ENCODE measurements at regions of chr5 and their contacts with region 1.

Region 1: GRCh38 chr5:76337953-76338451 is 65.1 kb upstream of the IQGAP2 start:
- DNase-seq: peak; percentile 61 to 79 (median 68)
- ATAC-seq: peak; percentile 90
- H3K4me3 ChIP-seq: no peak overlapping the region
- H3K27ac ChIP-seq: no peak overlapping the region
- H3K4me1 ChIP-seq: peaks cover 2 to 9% of the 10 kb centered on the region in 2 experiments; a peak in 3 of 5 replicates
- H3K27me3 ChIP-seq: no peaks in the 10 kb centered on the region
- CTCF ChIP-seq: peak; percentile 68 to 72 (median 68)
- EP300 ChIP-seq: 0 out of 2 replicates have a peak, but pooled peaks have one; percentile 7
- POLR2A ChIP-seq: no peak
- RAD21 ChIP-seq: peak; percentile 65 to 79

Region 2: DNA sequence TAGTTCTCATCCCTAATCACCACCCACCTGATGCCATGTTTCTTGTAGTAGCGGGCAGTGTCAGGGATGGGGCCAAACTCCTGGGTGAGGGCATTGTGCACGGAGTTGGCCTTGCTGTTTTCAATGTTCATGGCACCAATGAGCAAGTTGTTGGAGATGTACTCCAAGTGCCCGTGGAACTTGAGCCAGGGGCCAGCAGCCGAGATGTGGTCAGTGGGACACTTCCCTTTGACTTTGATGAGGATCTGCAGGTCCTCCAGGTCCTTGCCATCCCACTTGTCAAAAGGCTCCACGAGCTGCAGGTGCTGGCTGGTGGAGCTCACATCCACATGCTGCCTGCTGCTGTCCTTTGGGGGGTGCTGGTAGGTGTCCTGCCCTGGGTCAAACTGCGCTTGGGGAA is 417.0 kb before region 1 on chr5:
- CTCF ChIA-PET with region 1: no interaction called
- POLR2A ChIA-PET with region 1: no interaction called
- in situ Hi-C with region 1: no loop called
- intact Hi-C with region 1: no loop called
- DNase-seq: no peak
- ATAC-seq: no peak
- H3K4me3 ChIP-seq: no peak overlapping the region
- H3K27ac ChIP-seq: no peak overlapping the region
- H3K4me1 ChIP-seq: no peaks in the 10 kb centered on the region
- H3K27me3 ChIP-seq: peaks cover 0 to 3% of the 10 kb centered on the region in 2 experiments; a peak in 1 of 5 replicates
- CTCF ChIP-seq: no peak
- EP300 ChIP-seq: no peak
- POLR2A ChIP-seq: no peak
- RAD21 ChIP-seq: no peak

Region 3: DNA sequence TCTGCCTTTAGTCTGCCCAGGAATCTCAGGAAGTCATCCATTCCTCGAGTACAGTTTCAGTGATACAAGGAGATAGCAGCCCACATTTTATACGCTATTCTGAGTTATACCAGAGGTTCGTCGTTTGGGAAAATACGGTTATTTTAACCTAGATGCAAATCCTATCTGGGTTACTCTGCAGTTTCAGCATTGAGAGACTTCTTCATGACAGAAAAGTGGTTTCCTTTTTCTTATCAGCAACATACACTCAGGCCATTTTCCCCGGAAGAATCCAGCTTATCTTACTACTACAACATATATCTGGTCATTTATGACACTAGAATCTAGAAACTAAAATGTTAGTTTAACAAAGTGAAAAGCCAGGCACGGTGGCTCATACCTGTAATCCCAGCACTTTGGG is 18.3 kb before region 1 on chr5:
- CTCF ChIA-PET with region 1: no interaction called
- POLR2A ChIA-PET with region 1: no interaction called
- in situ Hi-C with region 1: no loop called
- intact Hi-C with region 1: no loop called
- DNase-seq: peak; percentile 59 to 84 (median 72)
- ATAC-seq: peak; percentile 93
- H3K4me3 ChIP-seq: no peak overlapping the region
- H3K27ac ChIP-seq: peak overlapping the region; percentile 69
- H3K4me1 ChIP-seq: peaks cover 11 to 21% of the 10 kb centered on the region in 2 experiments; a peak in 4 of 5 replicates
- H3K27me3 ChIP-seq: no peaks in the 10 kb centered on the region
- CTCF ChIP-seq: no peak
- EP300 ChIP-seq: peak; percentile 96
- POLR2A ChIP-seq: no peak
- RAD21 ChIP-seq: 0 out of 4 replicates have a peak, but pooled peaks of 1 of the 2 experiments have one; percentile 9

Region 4: DNA sequence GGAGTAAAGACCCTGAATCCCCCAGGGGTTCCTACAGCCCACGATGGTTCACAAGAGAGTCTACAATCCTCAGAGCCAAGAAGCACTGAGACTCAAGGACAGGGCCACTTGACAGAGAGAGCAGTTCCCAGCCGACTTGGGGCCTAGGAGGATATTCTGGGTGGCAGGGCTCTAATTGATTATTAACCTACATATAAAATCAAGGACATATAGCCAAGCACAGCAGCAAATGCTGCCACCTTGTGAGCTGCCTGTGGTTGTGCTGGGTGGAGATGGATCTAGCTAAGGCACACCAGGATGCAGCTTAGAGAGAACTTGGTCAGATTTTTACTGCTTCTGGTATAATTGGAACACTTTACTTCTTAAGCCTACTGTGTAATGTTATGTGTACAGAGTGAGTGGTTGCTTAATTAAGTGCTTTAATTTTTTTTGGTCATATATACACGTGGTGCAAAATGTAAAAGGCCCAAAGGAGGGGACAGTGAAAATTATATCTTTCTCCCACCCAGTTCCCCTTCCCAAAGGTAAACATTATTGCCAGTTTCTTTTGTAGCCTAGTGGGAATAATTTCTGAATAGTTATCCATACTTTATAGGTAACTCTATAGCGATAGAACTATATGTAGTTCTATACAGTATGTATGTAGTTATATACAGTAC is 206.4 kb after region 1 on chr5:
- CTCF ChIA-PET with region 1: interaction called, 9 read pairs
- POLR2A ChIA-PET with region 1: no interaction called
- in situ Hi-C with region 1: no loop called
- intact Hi-C with region 1: loop called (anchors 5 kb)
- DNase-seq: peak; percentile 26 to 64 (median 40)
- ATAC-seq: peak; percentile 77
- H3K4me3 ChIP-seq: no peak overlapping the region
- H3K27ac ChIP-seq: no peak overlapping the region
- H3K4me1 ChIP-seq: peaks cover 7 to 47% of the 10 kb centered on the region in 2 experiments; a peak in 4 of 5 replicates
- H3K27me3 ChIP-seq: no peaks in the 10 kb centered on the region
- CTCF ChIP-seq: peak; percentile 66 to 71 (median 71)
- EP300 ChIP-seq: no peak
- POLR2A ChIP-seq: no peak
- RAD21 ChIP-seq: peak; percentile 80 to 83

Region 5: DNA sequence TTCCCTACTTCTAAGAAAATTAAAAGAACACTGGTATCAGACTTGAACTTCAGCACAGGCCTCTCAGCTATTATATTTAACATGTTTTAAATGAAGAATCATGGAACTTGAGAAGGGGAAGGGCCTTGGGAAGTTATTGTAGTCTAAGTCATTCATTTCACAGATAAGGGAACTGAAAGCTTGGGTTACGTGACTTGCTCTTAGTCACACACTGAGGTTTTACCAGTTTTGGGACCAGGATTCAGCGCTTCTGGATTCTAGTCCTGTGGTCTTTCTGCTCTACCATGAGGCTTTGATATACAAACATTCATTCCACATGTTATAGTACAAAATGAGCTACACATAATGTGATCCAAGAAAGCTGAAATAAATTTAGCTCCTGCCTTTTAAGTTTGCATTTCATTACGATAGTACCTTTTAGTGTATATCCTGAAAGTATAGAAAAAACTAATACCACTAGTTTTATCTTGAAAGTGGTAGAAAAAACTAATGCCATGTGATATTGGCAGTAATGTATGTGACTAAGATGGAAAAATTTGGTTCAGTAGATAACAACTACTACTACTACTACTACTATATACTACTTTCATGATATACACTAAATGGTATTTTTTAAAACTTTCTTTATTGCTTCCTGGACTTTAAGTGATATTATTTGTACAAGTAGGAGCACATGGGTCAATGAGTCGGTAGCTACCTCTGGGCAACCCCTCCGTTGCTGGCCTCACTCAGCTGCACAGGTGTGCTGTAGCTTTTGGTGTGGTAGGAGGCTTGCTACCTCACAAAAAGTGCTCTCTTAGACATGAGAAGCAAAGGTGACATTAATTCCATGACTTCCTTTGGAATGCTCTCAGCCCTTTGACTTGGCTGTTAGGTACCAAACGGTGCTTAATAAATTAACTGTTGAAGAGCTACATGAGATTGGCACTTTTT is 244.5 kb after region 1 on chr5:
- CTCF ChIA-PET with region 1: interaction called, 10 read pairs
- POLR2A ChIA-PET with region 1: no interaction called
- in situ Hi-C with region 1: no loop called
- intact Hi-C with region 1: no loop called
- DNase-seq: peak in 1 of 4 experiments; percentile 51
- ATAC-seq: peak; percentile 64
- H3K4me3 ChIP-seq: no peak overlapping the region
- H3K27ac ChIP-seq: no peak overlapping the region
- H3K4me1 ChIP-seq: peaks cover 3 to 15% of the 10 kb centered on the region in 2 experiments; a peak in 4 of 5 replicates
- H3K27me3 ChIP-seq: no peaks in the 10 kb centered on the region
- CTCF ChIP-seq: no peak
- EP300 ChIP-seq: no peak
- POLR2A ChIP-seq: no peak
- RAD21 ChIP-seq: no peak

Measured in K562 (cell line).